Colonic mucosa (tissue), 4 donors: ENCODE measurements at regions of chr20 and their contacts with region 1.

Region 1: GRCh38 chr20:37396416-37397075 is 50.6 kb downstream of the SRC start:
- DNase-seq: no peak
- H3K4me3 ChIP-seq: no peak overlapping the region
- H3K27ac ChIP-seq: no peak overlapping the region
- H3K4me1 ChIP-seq: no peaks in the 10 kb centered on the region
- H3K27me3 ChIP-seq: no peaks in the 10 kb centered on the region
- CTCF ChIP-seq: no peak

Region 2: GRCh38 chr20:37327748-37328147 is 68.8 kb before region 1 on chr20:
- intact Hi-C with region 1: no loop called
- DNase-seq: peak; percentile 71
- H3K4me3 ChIP-seq: no peak overlapping the region
- H3K27ac ChIP-seq: no peak overlapping the region
- H3K4me1 ChIP-seq: no peaks in the 10 kb centered on the region
- H3K27me3 ChIP-seq: no peaks in the 10 kb centered on the region
- CTCF ChIP-seq: no peak

Region 3: DNA sequence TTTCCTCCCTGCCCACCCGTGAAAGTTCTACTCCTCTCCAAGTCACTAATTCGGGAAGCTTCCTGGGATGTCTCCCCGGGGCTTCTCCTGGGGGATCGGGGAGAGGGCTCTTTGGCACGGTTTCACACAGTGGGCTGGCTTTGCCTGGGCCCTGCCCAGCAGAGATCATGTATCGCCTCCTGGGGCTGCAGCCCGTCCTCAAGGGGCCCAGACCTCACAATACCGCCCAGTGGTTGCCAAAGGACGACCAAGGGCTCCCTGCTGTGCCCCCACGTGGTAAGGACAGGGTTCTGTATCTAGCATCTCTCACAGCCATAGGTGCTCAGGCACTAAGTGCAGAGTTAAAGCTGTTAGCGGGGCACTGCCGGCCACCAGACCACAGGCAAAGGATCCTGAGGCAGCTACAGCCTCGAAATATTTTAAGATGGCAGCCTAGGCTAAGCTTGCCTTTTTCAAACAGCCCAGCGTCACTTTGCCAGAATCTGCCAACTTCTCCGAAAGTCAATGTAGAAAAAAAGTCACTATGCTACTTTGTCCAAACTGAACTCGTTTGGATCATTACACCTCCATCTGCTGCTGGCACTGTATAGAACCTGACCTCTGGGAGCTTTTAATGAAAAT is 123.1 kb after region 1 on chr20:
- intact Hi-C with region 1: loop called (anchors 5 kb)
- DNase-seq: no peak
- H3K4me3 ChIP-seq: no peak overlapping the region
- H3K27ac ChIP-seq: no peak overlapping the region
- H3K4me1 ChIP-seq: peaks cover 6% of the 10 kb centered on the region
- H3K27me3 ChIP-seq: no peaks in the 10 kb centered on the region
- CTCF ChIP-seq: no peak